ENCODE measurements at regions of chr3 and their contacts with region 1.

Region 1: DNA sequence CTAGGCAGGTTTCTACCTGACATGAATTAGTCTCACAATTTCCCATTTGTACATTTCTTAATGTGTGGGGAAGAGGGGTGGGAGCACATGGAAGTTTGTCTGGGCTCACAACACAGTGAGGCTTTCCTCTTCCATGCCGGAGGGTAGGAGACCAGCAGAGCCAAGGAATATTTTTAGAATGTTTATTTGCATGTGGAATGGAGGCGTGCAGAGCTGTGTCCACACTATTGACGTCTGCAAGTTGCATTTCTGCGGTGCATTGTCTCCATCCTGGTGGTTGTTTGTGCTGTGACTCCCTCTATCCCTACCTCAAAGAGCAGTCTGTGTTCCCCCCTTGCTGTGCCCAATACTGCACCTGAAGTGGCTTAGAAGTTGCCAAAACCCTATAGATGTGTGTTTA is 103.1 kb upstream of the LRTM1 start:
- DNase-seq: no peak

Region 2: DNA sequence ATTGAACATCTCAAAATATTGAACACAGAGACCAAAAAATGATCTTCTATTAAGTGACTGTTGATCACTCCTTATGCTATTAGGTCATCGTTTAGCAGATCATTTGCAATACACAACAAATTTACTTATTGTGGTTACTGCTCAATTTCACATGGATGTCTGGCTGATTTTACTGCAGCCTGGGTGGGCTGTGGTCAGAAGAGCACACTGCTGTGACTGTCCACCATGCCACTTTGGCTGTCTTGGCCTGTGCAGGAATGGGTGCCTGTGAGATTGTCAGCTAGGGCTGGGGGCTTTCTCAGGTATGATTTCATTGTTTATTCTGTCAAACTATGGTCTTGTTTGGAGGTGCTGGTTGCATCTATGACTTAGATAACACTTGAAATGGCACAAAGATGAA is 23.0 kb before region 1 on chr3:
- intact Hi-C with region 1: loop called in 1 of 2 experiments (anchors 2 kb)
- DNase-seq: no peak

Region 3: GRCh38 chr3:55066551-55067047 is 35.7 kb after region 1 on chr3:
- intact Hi-C with region 1: no loop called
- DNase-seq: no peak

Measured in posterior vena cava (tissue), 2 donors.